ENCODE measurements at regions of chr17 and their contacts with region 1.

Region 1: DNA sequence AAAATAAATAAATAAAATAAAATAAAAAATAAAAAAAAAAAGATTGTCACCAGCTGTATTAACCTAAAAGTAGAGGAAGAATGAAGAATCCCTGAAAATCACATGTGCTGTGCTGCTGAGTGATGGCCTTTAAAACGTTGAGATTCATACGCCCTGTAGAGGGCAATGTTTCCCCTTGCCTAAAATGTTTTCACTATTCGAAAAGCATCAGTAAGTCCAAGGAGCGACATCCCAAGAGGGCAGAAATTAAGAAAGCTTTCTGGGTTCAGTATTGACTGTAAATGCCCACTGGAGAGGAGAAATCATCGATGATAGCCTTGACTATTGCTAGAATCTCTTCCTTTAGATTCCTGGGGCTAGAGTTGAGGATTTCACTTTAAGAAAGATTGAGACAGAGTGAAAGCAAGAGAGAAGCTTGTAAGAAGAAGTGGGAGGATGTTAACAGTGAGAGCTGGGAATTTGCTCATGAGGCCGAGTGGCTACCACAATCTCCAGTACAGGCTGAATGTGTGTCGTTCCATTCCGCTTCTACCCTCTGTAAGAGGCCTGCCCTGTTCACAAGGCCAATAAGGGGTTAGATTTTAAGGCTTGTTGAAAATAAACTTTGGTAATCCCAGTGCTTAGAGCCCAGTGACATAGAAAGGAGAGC is 170.8 kb upstream of the FAM20A start:
- DNase-seq: no peak
- H3K4me3 ChIP-seq: peak overlapping the region; percentile 46
- H3K27ac ChIP-seq: peak overlapping the region; percentile 75
- H3K4me1 ChIP-seq: peaks cover 16% of the 10 kb centered on the region
- H3K27me3 ChIP-seq: no peaks in the 10 kb centered on the region
- CTCF ChIP-seq: peak; percentile 71

Region 2: DNA sequence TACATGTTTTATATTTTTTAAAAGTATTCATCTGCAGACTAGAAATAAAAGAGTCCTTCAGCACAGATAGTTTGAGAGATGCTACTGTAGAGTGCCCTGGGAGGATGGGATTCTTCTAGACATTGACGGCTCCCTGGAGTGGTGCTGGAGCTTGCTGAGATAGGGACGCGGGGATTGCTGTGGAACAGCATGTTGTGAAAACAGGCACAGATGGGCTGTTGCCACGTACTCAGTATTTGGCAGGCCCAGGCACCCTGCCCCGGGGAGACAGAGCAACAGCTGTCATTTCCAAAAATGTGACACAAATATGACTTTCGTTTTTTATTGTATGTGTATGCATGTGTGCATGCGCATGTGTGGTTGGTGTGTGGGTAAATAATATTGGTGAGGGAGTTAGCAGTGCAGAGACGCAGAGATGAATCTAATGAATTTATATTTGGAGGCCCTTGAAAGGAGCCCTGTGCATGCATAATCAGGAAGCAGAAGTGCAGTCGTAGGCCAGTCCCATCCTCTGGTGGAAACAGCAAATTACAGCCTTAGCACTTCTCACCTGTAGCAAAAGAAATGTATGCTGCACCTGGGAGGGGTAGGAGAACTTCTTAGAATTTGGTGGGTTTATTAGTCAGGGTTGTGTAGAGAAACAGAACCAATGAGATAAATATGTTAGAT is 189.4 kb after region 1 on chr17:
- intact Hi-C with region 1: loop called (anchors 10 kb)
- DNase-seq: peak; percentile 68
- H3K4me3 ChIP-seq: no peak overlapping the region
- H3K27ac ChIP-seq: peak overlapping the region; percentile 55
- H3K4me1 ChIP-seq: peaks cover 8% of the 10 kb centered on the region
- H3K27me3 ChIP-seq: no peaks in the 10 kb centered on the region
- CTCF ChIP-seq: no peak

Region 3: GRCh38 chr17:69235338-69235930 is 463.4 kb after region 1 on chr17:
- intact Hi-C with region 1: loop called (anchors 5 kb)
- DNase-seq: peak; percentile 63
- H3K4me3 ChIP-seq: no peak overlapping the region
- H3K27ac ChIP-seq: peak overlapping the region; percentile 46
- H3K4me1 ChIP-seq: no peaks in the 10 kb centered on the region
- H3K27me3 ChIP-seq: no peaks in the 10 kb centered on the region
- CTCF ChIP-seq: peak; percentile 83